Caco-2 (cell line): ENCODE measurements at regions of chrX and their contacts with region 1.

Region 1: DNA sequence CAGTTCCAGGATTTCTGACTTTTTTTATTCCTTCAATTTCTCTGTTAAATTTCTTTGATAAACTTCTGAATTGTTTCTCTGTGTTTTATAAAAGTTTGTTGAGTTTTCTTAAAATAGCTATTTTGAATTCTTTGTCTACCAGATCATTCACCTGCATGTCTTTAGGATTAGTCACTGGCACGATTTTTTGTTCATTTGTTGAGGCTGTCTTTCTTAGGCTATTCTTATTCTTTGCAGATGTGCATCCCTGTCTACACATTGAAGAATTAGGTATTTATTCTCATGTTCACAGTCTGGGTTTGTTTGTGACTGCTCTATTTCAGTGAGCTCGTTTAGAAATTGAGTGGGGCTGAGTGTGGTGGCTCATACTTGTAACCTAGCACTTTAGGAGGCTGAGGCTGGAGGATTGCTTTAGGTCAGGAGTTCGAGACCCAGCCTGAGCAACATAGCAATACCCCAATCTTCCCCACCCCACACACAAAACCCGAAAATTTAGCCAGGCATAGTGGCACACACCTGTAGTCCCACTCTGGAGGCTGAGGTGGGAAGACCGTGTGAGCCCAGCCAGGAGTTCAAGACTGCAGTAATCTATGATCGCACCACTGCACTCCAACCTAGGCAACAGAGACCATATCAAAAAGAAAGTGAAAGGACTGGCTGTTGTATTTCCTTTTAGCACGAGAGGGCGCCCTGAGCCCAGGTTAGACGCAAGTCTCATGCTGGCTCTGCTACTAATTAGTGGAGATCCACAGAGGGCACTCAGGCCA is 42.0 kb downstream of the F8 start:
- DNase-seq: peak; percentile 52 to 66
- H3K4me3 ChIP-seq: peak overlapping the region; percentile 20; the same call in 1 of the 2 replicates
- H3K4me3 Mint-ChIP-seq: no peak overlapping the region
- H3K27ac Mint-ChIP-seq: no peak overlapping the region
- H3K4me1 ChIP-seq: no peaks in the 10 kb centered on the region
- H3K4me1 Mint-ChIP-seq: no peaks in the 10 kb centered on the region
- H3K27me3 ChIP-seq: no peaks in the 10 kb centered on the region; the same call in 1 of the 2 replicates
- H3K27me3 Mint-ChIP-seq: no peaks in the 10 kb centered on the region
- CTCF ChIP-seq: peak; percentile 47 to 59

Region 2: DNA sequence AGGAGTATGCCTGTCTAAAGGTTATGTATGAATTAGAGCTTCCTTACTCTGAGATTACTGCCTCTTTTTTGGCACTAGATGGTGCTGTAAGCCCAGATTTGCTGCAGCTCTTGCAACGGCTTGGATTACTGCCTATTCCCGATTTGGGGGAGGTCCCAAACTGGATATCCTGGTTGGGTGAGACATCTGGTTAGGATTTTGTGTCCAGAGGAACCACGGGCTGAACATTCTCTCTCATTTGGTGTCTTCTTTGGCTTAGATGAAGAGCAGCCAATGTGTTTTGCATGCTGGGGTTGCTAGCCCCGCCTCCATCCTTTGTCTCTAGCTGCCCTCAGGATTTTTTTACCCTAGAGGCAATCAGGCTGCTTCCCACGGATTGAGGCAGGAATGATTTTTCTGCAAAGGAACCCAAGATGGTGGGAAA is 62.4 kb before region 1 on chrX:
- CTCF ChIA-PET with region 1: interaction called, 4 read pairs
- POLR2A ChIA-PET with region 1: no interaction called
- intact Hi-C with region 1: loop called (anchors 1 kb)
- DNase-seq: peak; percentile 50 to 54
- H3K4me3 ChIP-seq: no peak overlapping the region
- H3K4me3 Mint-ChIP-seq: peak overlapping the region; percentile 59
- H3K27ac Mint-ChIP-seq: no peak overlapping the region
- H3K4me1 ChIP-seq: no peaks in the 10 kb centered on the region
- H3K4me1 Mint-ChIP-seq: no peaks in the 10 kb centered on the region
- H3K27me3 ChIP-seq: no peaks in the 10 kb centered on the region
- H3K27me3 Mint-ChIP-seq: peaks cover 5% of the 10 kb centered on the region
- CTCF ChIP-seq: peak; percentile 36 to 63

Region 3: GRCh38 chrX:155056877-155057792 is 76.6 kb after region 1 on chrX:
- CTCF ChIA-PET with region 1: no interaction called
- POLR2A ChIA-PET with region 1: no interaction called
- intact Hi-C with region 1: loop called (anchors 1 kb)
- DNase-seq: peak; percentile 49 to 52
- H3K4me3 ChIP-seq: no peak overlapping the region
- H3K4me3 Mint-ChIP-seq: no peak overlapping the region
- H3K27ac Mint-ChIP-seq: no peak overlapping the region
- H3K4me1 ChIP-seq: no peaks in the 10 kb centered on the region
- H3K4me1 Mint-ChIP-seq: no peaks in the 10 kb centered on the region
- H3K27me3 ChIP-seq: no peaks in the 10 kb centered on the region
- H3K27me3 Mint-ChIP-seq: no peaks in the 10 kb centered on the region
- CTCF ChIP-seq: peak; percentile 44 to 58

Region 4: GRCh38 chrX:155108427-155108826 is 127.9 kb after region 1 on chrX:
- CTCF ChIA-PET with region 1: no interaction called
- POLR2A ChIA-PET with region 1: no interaction called
- intact Hi-C with region 1: no loop called
- DNase-seq: no peak
- H3K4me3 ChIP-seq: no peak overlapping the region
- H3K4me3 Mint-ChIP-seq: no peak overlapping the region
- H3K27ac Mint-ChIP-seq: no peak overlapping the region
- H3K4me1 ChIP-seq: no peaks in the 10 kb centered on the region
- H3K4me1 Mint-ChIP-seq: no peaks in the 10 kb centered on the region
- H3K27me3 ChIP-seq: no peaks in the 10 kb centered on the region
- H3K27me3 Mint-ChIP-seq: no peaks in the 10 kb centered on the region
- CTCF ChIP-seq: no peak

Region 5: GRCh38 chrX:155148724-155149537 is 168.4 kb after region 1 on chrX:
- CTCF ChIA-PET with region 1: no interaction called
- POLR2A ChIA-PET with region 1: no interaction called
- intact Hi-C with region 1: loop called (anchors 2 kb)
- DNase-seq: peak in 1 of 2 experiments; percentile 25
- H3K4me3 ChIP-seq: no peak overlapping the region
- H3K4me3 Mint-ChIP-seq: no peak overlapping the region
- H3K27ac Mint-ChIP-seq: no peak overlapping the region
- H3K4me1 ChIP-seq: no peaks in the 10 kb centered on the region
- H3K4me1 Mint-ChIP-seq: no peaks in the 10 kb centered on the region
- H3K27me3 ChIP-seq: no peaks in the 10 kb centered on the region
- H3K27me3 Mint-ChIP-seq: no peaks in the 10 kb centered on the region
- CTCF ChIP-seq: peak in 1 of 2 experiments; percentile 28